Psoas muscle (tissue), 8 donors: ENCODE measurements at regions of chr5 and their contacts with region 1.

Region 1: GRCh38 chr5:78467752-78468357 is 107.4 kb downstream of the SCAMP1 start:
- DNase-seq: no peak
- ATAC-seq: peak; percentile 47 to 78 (median 56)
- H3K4me3 ChIP-seq: no peak overlapping the region
- H3K27ac ChIP-seq: no peak overlapping the region
- H3K4me1 ChIP-seq: peaks cover 4% of the 10 kb centered on the region
- H3K27me3 ChIP-seq: no peaks in the 10 kb centered on the region
- CTCF ChIP-seq: peak; percentile 77

Region 2: GRCh38 chr5:78482948-78483347 is 15.1 kb after region 1 on chr5:
- intact Hi-C with region 1: no loop called
- DNase-seq: no peak
- ATAC-seq: no peak
- H3K4me3 ChIP-seq: no peak overlapping the region
- H3K27ac ChIP-seq: no peak overlapping the region
- H3K4me1 ChIP-seq: no peaks in the 10 kb centered on the region
- H3K27me3 ChIP-seq: peaks cover 0 to 2% (median 0%) of the 10 kb centered on the region in 3 donors
- CTCF ChIP-seq: no peak

Region 3: DNA sequence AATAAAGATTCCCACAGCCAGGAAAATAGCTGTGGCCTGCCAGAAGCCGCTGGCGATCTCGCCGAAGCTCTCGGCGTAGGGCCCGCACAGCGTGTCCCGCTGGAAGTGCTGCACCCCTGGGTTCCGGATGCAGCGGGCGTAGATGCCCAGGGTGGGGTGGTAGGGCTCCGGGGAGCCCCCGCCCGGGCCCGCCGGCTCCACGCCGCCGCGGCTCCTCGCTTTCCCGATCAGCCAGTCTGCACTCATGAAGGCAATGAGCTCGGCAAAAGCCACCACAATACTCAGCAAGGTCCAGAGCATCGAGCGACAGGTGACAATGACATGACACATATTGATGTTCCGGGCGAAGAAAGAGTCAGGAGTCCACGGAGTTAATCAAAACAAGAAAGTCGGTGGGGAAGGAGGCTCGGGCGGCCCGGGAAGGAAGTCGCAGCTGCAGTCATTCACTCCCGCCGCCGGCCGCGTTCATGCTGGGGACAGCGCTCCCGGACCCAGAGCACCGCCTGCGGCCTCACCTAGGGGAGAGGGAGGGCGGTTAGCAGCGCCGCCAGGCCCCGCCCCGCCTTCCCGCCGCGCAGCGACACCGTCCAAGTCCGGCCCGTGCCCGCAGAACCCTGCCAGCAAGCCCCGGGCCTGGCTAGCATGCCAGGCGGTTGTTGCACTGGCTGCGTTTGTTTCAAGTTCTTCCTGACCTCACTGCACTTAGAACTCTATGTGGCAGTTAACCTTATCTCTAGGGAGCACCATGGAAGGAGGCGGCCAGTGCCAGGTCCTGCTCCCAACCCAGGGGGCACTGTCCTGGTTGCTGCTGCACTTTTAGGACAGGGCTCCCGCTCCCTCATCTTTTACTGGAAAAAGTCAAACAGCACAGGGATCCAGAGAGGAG is 42.3 kb after region 1 on chr5:
- intact Hi-C with region 1: loop called in 1 of 2 experiments (anchors 5 kb)
- DNase-seq: peak; percentile 70 to 87
- ATAC-seq: peak; percentile 85 to 96 (median 92)
- H3K4me3 ChIP-seq: peak overlapping the region; percentile 70
- H3K27ac ChIP-seq: peak overlapping the region; percentile 73
- H3K4me1 ChIP-seq: peaks cover 52% of the 10 kb centered on the region
- H3K27me3 ChIP-seq: no peaks in the 10 kb centered on the region
- CTCF ChIP-seq: peak; percentile 23

Region 4: DNA sequence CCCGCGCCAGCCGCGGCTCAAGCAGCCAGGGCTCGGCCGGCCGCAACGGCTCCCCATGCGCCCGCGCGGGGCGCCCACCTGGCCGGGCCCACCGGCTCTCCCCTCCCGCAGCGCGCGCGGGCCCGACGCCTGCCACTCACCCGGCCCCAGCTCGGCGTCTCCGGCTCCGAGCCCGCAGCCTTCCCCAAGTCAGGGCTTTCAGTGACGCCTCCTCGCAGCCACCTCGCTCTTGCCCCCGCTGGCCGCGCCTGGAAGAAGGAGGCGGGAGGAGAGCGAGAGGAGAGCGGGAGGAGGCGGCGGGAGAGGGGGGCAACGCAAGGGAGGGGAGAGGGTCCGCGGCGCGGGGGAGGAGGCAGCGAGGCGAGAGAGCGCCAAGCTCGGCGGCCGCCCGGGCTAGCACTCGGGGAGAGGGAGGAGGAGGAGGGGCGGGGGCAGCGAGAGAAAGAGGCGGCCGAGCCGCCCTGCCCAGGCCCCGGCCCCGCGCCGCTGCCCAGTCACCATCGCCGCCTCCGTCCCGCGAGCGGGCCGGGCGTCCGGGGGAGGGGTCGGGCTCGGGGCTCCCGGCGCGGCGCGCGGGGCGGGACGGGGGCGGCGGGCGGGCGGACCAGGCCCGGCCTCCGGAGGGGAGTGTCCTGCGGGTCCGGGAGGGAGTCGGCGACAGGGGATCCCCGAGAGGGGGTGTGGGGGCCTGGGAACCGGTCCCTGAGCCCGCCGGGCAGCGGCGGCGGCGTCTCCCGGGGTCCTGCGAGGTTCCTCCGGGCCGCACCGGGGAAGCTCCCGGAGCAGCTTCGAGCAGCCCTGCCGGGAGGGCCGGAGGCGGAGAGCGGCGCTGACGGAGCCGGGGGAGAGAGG is 180.7 kb after region 1 on chr5 and contains the start of gene LHFPL2:
- intact Hi-C with region 1: loop called in 1 of 2 experiments (anchors 5 kb)
- DNase-seq: peak; percentile 78 to 88
- ATAC-seq: peak; percentile 73 to 87 (median 78)
- H3K4me3 ChIP-seq: peak within 1 kb of the TSS; percentile 67
- H3K27ac ChIP-seq: peak within 1 kb of the TSS; percentile 84
- H3K4me1 ChIP-seq: peaks cover 5% of the 10 kb centered on the region
- H3K27me3 ChIP-seq: no peaks in the 10 kb centered on the region
- CTCF ChIP-seq: no peak
- total RNA-seq, gene LHFPL2: 3.6 to 6.4 (median 4.8) TPM

Region 5: DNA sequence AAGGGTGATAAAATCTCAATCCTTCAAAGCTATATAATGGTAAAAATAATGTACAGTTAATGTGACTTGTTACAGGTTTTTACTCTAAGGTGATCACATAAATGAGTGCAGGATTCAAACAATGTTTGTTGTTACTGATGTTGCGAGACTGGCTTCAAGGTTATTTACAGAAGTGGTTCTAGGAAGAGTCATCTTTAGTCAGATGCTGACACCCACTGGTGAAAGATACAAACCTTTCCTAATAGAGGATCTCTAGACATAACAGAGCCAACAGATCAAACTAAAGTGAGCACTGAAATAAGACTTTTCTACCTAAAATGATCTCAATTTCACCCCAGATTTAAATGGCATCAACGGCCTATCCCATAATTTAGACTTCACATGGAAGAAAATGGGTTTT is 497.0 kb after region 1 on chr5:
- intact Hi-C with region 1: loop called in 1 of 2 experiments (anchors 5 kb)
- DNase-seq: no peak
- ATAC-seq: peak; percentile 68 to 83 (median 82)
- H3K4me3 ChIP-seq: no peak overlapping the region
- H3K27ac ChIP-seq: no peak overlapping the region
- H3K4me1 ChIP-seq: no peaks in the 10 kb centered on the region
- H3K27me3 ChIP-seq: no peaks in the 10 kb centered on the region
- CTCF ChIP-seq: peak; percentile 64